ENCODE measurements at regions of chr18 and their contacts with region 1.

Region 1: DNA sequence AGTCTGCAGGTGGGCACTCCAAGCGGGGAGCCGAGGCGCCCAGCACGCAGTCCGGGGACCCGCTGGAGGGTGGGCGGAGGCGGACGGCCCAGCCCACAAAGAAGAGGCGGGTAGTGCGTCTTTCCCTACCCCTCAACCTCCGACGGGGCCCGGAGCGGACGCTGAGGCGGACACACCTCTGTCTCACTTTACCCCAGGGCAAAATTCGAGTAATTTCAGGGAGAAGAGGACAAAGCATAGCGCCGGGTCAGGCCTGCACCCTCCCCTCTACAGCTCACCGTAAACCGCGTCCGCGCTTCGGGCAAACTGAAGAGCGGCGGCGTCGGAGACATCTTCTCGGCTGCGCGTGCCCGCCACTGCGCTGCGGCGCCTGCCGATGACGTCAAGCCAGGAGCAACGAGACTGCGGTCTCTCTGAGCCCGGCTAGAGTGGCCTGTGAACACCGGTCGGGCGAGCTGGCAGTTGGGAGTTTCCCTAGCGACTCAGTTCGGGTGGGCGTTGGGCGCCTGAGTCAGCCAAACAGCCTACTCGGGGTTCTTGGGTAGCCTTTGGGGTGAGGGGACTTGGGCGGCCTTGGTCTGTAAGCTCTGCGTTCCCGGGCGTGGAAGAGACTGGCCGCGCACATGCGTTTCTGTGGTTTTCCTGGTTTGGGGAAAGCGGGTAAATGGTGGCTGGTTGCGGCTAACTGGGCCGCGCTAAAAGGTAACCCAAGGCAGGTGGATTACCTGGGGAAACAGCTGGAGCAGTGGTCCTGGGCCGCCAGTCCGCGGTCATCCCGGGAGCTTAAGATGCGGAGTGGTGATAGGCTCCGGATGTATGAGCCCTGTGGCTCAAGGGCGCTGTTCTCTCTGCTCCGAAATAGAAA is at the start of gene THOC1:
- DNase-seq: peak; percentile 75 to 89
- H3K4me3 ChIP-seq: peak within 1 kb of the TSS; percentile 64
- H3K27ac ChIP-seq: peak within 1 kb of the TSS; percentile 64
- H3K4me1 ChIP-seq: 0 out of 2 replicates have a peak, but pooled peaks cover 7% of the 10 kb centered on the region
- H3K27me3 ChIP-seq: no peaks in the 10 kb centered on the region
- CTCF ChIP-seq: no peak
- total RNA-seq, gene THOC1: 50.8 and 55.6 TPM in 2 replicates

Region 2: DNA sequence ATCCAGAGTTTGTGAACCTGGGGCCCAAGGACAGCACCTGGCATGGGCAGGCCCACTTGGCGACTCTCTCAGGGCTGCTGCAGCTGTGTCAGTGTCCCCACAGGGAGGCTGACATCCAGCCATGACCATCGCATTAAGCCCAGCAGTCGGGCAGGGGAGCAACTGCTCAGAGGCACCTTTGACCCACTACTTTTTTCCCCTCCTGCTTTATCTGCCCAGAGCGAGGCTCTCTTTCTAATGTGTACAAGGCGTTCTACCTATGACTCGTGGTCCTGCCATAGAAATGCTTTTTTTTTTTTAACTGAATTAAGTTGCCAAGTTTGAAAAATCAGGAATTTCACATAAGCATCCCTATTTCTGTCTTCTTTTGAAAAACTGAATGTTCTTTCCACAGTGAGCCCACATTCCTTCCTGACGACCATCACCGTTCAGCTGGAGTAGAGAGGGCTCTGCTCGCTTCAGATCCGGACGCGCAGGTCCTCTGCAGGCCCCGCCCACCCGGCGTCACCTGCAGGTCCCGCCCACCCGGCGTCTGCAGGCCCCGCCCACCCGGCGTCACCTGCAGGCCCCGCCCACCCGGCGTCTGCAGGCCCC is 328.5 kb after region 1 on chr18:
- CTCF ChIA-PET with region 1: no interaction called
- POLR2A ChIA-PET with region 1: no interaction called
- intact Hi-C with region 1: loop called (anchors 2 kb)
- DNase-seq: peak in 1 of 2 experiments; percentile 5
- H3K4me3 ChIP-seq: peak overlapping the region; percentile 54
- H3K27ac ChIP-seq: no peak overlapping the region
- H3K4me1 ChIP-seq: peaks cover 9% of the 10 kb centered on the region
- H3K27me3 ChIP-seq: peaks cover 57% of the 10 kb centered on the region
- CTCF ChIP-seq: no peak

Region 3: GRCh38 chr18:839224-840022 is 571.5 kb after region 1 on chr18:
- CTCF ChIA-PET with region 1: no interaction called
- POLR2A ChIA-PET with region 1: no interaction called
- intact Hi-C with region 1: loop called (anchors 10 kb)
- DNase-seq: peak; percentile 49 to 76
- H3K4me3 ChIP-seq: no peak overlapping the region
- H3K27ac ChIP-seq: no peak overlapping the region
- H3K4me1 ChIP-seq: no peaks in the 10 kb centered on the region
- H3K27me3 ChIP-seq: no peaks in the 10 kb centered on the region
- CTCF ChIP-seq: peak; percentile 93